ENCODE measurements at regions of chr6 and their contacts with region 1.

Region 1: GRCh38 chr6:134174672-134175198 is 122.3 kb upstream of the SLC2A12 start:
- DNase-seq: peak; percentile 94
- CTCF ChIP-seq: peak; percentile 19

Region 2: DNA sequence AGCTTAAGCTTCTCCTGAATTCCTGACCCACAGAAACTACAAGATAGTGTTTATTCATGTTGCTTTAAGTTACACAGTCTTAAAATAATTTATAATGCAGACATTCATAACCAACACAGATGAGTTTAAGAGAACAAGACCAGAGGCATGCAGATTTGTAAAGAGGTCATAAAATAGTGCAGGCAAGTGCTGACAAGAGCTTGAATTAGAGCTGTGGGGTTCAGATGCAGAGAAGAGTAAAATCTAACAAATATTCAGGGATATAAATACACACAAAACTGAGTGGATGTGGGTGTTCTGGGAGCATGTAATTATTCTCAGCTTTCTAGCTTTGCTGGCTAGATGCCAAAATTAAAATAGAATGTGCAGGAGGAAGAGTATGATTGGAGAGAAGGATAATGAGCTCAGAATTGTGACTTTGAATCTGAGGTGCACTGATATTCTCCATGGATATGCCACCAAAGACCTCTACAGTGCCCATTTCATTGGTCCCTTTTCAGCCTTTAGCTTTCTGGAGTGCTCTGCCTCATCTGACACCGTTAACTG is 435.1 kb after region 1 on chr6:
- in situ Hi-C with region 1: no loop called
- DNase-seq: no peak
- CTCF ChIP-seq: no peak

Region 3: GRCh38 chr6:134640975-134641429 is 466.3 kb after region 1 on chr6:
- in situ Hi-C with region 1: loop called (anchors 10 kb)
- DNase-seq: peak; percentile 55
- CTCF ChIP-seq: peak; percentile 93

Region 4: GRCh38 chr6:134814086-134814709 is 639.5 kb after region 1 on chr6:
- in situ Hi-C with region 1: loop called (anchors 10 kb)
- DNase-seq: no peak
- CTCF ChIP-seq: no peak

Region 5: DNA sequence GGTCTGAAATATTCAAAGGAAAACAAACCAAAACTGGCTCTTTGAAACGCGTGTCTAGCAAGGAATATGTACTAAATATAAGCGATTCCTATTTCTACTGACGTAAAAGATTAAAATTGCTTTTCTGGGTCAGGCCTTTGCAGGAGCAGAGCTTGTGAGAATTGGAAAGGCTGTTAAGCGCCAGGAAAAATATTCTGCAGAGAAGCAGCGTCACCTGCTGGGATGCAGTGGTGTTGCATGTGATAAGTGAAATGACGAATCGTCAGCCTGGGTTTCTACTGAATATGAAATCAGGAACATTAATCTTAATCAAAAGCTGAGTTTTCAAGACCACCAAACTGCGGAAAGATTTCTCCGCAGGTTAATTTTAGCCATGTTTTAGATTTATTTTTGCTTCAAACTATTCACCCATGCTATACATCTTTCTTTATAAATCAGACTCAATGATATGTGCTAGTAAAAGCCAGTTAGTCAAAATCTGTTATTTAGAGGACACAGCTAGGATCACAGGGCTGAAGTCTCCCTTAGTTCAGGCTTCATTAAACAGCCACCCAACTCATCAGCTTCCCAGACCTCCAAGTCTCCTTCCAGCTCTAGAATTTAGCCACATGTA is 707.8 kb after region 1 on chr6:
- in situ Hi-C with region 1: loop called (anchors 10 kb)
- DNase-seq: peak; percentile 40
- CTCF ChIP-seq: peak; percentile 95

Region 6: DNA sequence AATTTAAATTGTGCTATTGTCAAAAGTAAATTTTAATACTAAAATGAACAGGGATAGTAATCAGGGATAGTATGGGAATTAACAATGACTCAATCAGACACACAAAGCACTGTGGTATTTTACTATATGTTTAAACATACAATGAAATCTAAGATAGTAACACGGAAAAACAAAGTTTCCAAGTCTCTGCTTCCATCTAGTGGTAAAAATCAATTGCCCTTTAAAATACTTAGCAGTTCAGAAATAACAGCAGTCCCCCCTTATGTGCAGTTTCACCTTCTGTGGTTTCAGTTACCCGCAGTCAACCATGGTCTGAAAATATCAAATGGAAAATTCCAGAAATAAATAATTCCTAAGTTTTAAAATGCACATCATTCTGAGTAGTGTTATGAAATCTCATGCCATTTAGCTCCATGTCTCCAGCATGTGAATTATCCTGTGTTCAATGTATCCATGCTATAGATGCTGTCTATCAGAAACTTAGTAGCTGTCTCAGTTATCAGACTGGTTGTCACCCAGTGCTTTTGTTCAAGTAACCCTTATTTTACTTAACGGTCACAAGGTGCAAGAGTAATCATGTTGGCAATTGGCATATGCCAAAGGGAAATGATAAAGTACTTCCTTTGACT is 1264.3 kb after region 1 on chr6:
- in situ Hi-C with region 1: loop called (anchors 25 kb)
- DNase-seq: peak; percentile 27
- CTCF ChIP-seq: peak; percentile 59

Measured in GM13976 (cell line).